ENCODE measurements at regions of chr12 and their contacts with region 1.

Region 1: GRCh38 chr12:108562348-108563135 is at the start of gene ISCU:
- DNase-seq: peak; percentile 96 to 98
- H3K4me3 ChIP-seq: peak within 1 kb of the TSS; percentile 93 to 100 (median 98)
- H3K27ac ChIP-seq: peak within 1 kb of the TSS; percentile 91 to 95
- H3K4me1 ChIP-seq: peaks cover 0 to 6% of the 10 kb centered on the region in 2 donors
- H3K27me3 ChIP-seq: no peaks in the 10 kb centered on the region
- CTCF ChIP-seq: no peak
- POLR2A ChIP-seq: peak; percentile 56
- total RNA-seq, gene ISCU: 220 to 328 (median 227) TPM

Region 2: DNA sequence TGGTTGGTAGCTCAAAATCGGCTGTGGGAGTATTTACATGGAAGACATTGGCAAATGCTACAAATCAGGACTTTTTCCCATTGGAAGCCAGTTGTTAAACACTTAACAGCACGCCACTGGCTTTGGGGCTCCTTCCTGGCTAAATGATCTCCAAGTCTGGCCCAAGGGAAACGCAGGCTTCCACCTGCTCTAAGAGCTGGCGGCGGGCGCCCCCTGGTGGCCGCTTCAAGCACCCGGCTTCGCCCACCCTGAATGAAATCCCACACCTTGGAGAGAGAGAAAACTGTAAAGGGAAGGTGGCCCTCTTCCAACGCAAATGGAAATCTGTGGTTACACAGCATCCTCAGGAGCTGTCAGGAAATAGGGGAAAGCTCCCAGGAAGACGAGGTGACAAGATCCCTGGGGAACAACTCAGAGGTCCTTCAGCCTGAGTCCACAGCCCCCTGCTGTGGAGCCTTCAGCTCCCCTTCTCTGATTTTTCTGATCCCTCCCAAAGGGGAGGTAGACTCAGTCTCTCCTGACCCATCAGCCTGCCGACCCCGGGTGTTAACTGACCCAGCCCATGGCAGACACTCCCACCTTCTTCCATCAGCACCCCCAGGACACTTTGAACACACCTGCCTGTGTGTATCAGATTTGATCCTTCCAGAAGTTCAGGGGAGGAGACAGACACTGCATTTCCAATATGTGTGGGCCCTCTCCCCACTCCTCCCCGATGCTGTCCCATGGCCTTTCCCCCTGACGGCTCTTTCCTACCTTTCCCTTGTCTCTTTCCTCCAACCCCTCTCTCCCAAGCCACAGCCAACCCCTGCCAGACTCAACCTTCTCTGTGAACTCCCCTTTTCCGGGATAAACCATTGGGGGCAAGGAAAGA is 55.8 kb after region 1 on chr12:
- intact Hi-C with region 1: loop called (anchors 5 kb)
- DNase-seq: peak; percentile 65 to 76
- H3K4me3 ChIP-seq: no peak overlapping the region
- H3K27ac ChIP-seq: no peak overlapping the region
- H3K4me1 ChIP-seq: no peaks in the 10 kb centered on the region
- H3K27me3 ChIP-seq: no peaks in the 10 kb centered on the region
- CTCF ChIP-seq: peak; percentile 89 to 95 (median 95)
- POLR2A ChIP-seq: no peak

Region 3: GRCh38 chr12:108803428-108804105 is 241.0 kb after region 1 on chr12:
- intact Hi-C with region 1: loop called (anchors 10 kb)
- DNase-seq: peak in 1 of 2 donors; percentile 83
- H3K4me3 ChIP-seq: no peak overlapping the region
- H3K27ac ChIP-seq: peak overlapping the region; percentile 85 to 90
- H3K4me1 ChIP-seq: no peaks in the 10 kb centered on the region
- H3K27me3 ChIP-seq: no peaks in the 10 kb centered on the region
- CTCF ChIP-seq: peak; percentile 92 to 99 (median 95)
- POLR2A ChIP-seq: no peak

Region 4: GRCh38 chr12:109093022-109093918 is 530.7 kb after region 1 on chr12 and contains the start of gene ALKBH2:
- intact Hi-C with region 1: loop called (anchors 5 kb)
- DNase-seq: peak; percentile 87 to 94
- H3K4me3 ChIP-seq: peak within 1 kb of the TSS; percentile 51 to 72 (median 63)
- H3K27ac ChIP-seq: peak within 1 kb of the TSS; percentile 73 to 85
- H3K4me1 ChIP-seq: peaks cover 5 to 15% of the 10 kb centered on the region in 2 donors
- H3K27me3 ChIP-seq: no peaks in the 10 kb centered on the region
- CTCF ChIP-seq: peak; percentile 77 to 97 (median 95)
- POLR2A ChIP-seq: no peak
- total RNA-seq, gene ALKBH2: 18.9 to 27.2 (median 18.9) TPM

Measured in breast epithelium (tissue), 4 donors.